ENCODE measurements at regions of chr4 and their contacts with region 1.

Region 1: GRCh38 chr4:4488405-4489404 is 53.1 kb downstream of the STX18 start:
- DNase-seq: peak; percentile 64
- CTCF ChIP-seq: peak; percentile 85

Region 2: GRCh38 chr4:4455210-4455865 is 33.4 kb before region 1 on chr4:
- CTCF ChIA-PET with region 1: no interaction called
- POLR2A ChIA-PET with region 1: no interaction called
- DNase-seq: no peak
- CTCF ChIP-seq: no peak

Region 3: DNA sequence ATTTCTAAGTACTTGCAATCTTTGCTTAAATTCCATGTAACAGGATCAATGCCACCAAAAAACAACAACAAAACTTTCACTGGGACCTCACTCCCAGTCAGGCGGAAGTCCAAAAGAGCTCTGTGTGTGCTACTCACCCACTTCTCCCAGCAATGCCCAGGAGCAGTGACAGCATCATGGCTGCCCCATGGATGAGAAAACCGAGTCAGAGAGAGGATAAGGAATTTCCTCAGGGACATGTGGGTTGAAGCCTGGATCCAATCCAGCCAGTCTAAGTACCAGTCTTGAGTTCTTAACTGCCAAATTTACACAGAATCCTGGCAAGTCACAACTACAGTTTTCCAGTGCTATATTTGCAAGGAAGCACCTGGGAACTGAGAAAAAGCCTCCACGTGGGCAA is 11.3 kb before region 1 on chr4:
- CTCF ChIA-PET with region 1: interaction called, 13 read pairs
- POLR2A ChIA-PET with region 1: no interaction called
- DNase-seq: no peak
- CTCF ChIP-seq: no peak

Region 4: DNA sequence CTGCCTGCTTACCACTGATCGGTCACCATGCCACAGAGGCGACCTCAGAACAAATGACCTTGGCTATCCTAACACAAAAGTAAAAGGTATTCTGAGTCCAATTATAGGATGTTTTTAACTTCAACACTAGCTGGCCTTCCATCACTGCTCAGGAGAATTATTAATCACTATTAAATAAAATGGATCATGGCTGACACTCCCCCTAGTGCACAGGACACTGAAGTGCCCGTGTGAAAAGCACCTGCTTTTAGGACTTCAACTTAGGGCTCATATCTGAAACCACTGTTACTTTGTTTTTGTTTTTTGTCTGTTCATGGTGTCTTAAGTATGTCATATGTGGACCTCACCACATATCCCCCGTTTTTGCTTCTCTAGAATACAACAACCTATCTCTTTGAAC is 19.2 kb after region 1 on chr4:
- CTCF ChIA-PET with region 1: interaction called, 11 read pairs
- POLR2A ChIA-PET with region 1: no interaction called
- DNase-seq: no peak
- CTCF ChIP-seq: peak; percentile 32

Region 5: GRCh38 chr4:4606321-4606720 is 117.6 kb after region 1 on chr4:
- CTCF ChIA-PET with region 1: no interaction called
- POLR2A ChIA-PET with region 1: no interaction called
- DNase-seq: no peak
- CTCF ChIP-seq: no peak

Region 6: DNA sequence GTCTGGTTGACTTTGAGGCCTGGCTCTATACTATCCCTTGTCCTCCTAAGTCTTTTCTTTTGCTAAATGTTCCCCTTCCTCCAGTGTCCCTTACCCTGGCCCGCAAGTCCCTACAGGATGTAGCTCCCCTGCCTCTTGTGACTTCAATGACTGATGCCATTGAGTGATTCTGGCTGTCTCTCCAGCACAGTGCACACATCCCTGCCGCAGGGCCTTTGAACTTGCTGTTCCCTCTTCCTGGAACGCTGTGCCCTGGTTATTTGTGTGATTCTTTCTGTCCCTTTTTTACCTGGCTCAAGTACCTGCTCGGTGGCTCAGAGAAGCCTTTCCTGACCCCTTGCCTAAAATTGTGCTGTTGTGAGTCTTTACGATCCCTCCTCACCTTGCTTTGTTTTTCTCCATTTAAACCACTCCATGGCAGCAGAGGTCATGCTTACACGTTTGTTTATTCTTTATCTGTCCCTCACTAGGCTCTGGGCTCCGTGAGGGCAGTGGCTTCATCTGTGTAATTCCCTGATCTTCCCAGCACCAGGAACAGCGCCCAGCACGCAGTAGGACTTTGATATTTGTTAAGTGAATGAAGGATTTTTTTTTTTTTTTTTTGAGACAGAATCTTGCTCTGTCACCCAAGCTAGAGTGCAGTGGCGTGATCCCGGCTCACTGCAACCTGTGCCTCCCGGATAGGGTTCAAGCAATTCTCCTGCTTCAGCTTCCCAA is 388.4 kb after region 1 on chr4:
- CTCF ChIA-PET with region 1: interaction called, 10 read pairs
- POLR2A ChIA-PET with region 1: no interaction called
- DNase-seq: no peak
- CTCF ChIP-seq: no peak

Measured in GM10248 (cell line).